A673 (cell line): ENCODE measurements at regions of chr16 and their contacts with region 1.

Region 1: DNA sequence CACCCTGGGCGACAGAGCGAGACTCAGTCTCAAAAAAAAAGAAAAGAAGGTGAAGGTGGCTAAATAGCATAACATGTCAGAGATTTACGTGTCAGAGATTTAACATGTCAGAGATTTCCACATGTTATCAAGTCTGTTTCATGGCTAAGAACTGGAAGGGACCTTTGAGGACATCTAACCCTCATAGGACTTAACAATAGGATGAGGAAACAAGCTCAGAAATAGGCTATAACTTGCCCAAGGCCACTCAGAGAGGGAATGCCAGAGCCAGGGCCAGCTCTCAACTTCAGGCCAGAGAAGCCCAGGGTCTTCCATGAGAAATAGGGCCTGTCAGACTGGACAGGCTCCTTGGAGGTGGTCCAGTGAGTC is 26.8 kb upstream of the ZNF629 start:
- DNase-seq: no peak
- H3K4me3 ChIP-seq: peak overlapping the region; percentile 53
- H3K27ac ChIP-seq: peak overlapping the region; percentile 64
- H3K4me1 ChIP-seq: peaks cover 5% of the 10 kb centered on the region
- H3K27me3 ChIP-seq: no peaks in the 10 kb centered on the region
- CTCF ChIP-seq: no peak

Region 2: GRCh38 chr16:30615358-30616091 is 198.3 kb before region 1 on chr16:
- CTCF ChIA-PET with region 1: no interaction called
- POLR2A ChIA-PET with region 1: no interaction called
- intact Hi-C with region 1: no loop called
- DNase-seq: peak; percentile 81
- H3K4me3 ChIP-seq: no peak overlapping the region
- H3K27ac ChIP-seq: no peak overlapping the region
- H3K4me1 ChIP-seq: no peaks in the 10 kb centered on the region
- H3K27me3 ChIP-seq: no peaks in the 10 kb centered on the region
- CTCF ChIP-seq: peak; percentile 93

Region 3: GRCh38 chr16:30874821-30875717 is 61.3 kb after region 1 on chr16:
- CTCF ChIA-PET with region 1: no interaction called
- POLR2A ChIA-PET with region 1: no interaction called
- intact Hi-C with region 1: loop called (anchors 2 kb)
- DNase-seq: peak; percentile 94
- H3K4me3 ChIP-seq: peak overlapping the region; percentile 85
- H3K27ac ChIP-seq: peak overlapping the region; percentile 84
- H3K4me1 ChIP-seq: no peaks in the 10 kb centered on the region
- H3K27me3 ChIP-seq: no peaks in the 10 kb centered on the region
- CTCF ChIP-seq: no peak

Region 4: DNA sequence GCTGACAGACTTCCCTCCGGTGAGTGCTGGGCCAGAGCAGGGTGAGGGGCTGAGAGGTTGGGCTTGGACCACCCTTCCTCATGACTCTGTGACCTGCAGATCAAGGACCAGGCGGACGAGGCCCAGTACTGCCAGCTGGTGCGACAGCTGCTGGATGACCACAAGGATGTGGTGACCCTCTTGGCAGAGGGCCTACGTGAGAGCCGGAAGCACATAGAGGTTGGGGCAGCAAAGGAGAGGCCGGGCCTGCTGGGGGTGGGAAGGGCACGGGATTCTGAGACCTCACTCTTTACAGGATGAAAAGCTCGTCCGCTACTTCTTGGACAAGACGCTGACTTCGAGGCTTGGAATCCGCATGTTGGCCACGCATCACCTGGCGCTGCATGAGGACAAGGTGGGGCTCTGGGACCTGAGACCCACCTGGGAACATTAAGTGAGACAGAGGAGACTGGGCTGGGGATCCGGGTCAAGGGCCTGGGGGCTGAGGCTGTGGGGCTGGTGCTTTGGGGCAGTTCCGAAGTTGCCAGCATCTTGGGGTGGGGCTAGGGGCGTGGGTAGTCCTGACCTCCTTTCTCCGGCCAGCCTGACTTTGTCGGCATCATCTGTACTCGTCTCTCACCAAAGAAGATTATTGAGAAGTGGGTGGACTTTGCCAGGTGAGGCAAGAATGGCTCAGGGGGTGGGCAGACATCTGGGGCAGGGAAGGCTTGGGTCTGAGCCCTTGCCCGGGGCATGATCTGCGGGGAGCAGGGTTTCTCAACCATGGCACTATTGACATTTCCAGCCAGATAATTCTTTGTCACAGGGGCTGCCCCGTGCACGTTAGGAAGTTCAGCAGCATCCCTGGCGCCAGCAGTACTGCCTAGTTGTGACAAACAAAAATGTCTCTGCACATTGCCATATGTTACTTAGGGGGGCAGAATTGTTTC is 296.6 kb after region 1 on chr16:
- CTCF ChIA-PET with region 1: no interaction called
- POLR2A ChIA-PET with region 1: no interaction called
- intact Hi-C with region 1: no loop called
- DNase-seq: no peak
- H3K4me3 ChIP-seq: no peak overlapping the region
- H3K27ac ChIP-seq: no peak overlapping the region
- H3K4me1 ChIP-seq: peaks cover 13% of the 10 kb centered on the region
- H3K27me3 ChIP-seq: no peaks in the 10 kb centered on the region
- CTCF ChIP-seq: no peak